ENCODE measurements at regions of chr22 and their contacts with region 1.

Region 1: GRCh38 chr22:24768537-24769374 is 5.8 kb downstream of the PIWIL3 start:
- DNase-seq: peak; percentile 65 to 81 (median 72)
- ATAC-seq: peak; percentile 93 to 100 (median 97)
- H3K4me3 ChIP-seq: no peak overlapping the region
- H3K27ac ChIP-seq: no peak overlapping the region
- H3K4me1 ChIP-seq: no peaks in the 10 kb centered on the region
- H3K27me3 ChIP-seq: no peaks in the 10 kb centered on the region
- CTCF ChIP-seq: peak; percentile 42 to 77 (median 61)

Region 2: DNA sequence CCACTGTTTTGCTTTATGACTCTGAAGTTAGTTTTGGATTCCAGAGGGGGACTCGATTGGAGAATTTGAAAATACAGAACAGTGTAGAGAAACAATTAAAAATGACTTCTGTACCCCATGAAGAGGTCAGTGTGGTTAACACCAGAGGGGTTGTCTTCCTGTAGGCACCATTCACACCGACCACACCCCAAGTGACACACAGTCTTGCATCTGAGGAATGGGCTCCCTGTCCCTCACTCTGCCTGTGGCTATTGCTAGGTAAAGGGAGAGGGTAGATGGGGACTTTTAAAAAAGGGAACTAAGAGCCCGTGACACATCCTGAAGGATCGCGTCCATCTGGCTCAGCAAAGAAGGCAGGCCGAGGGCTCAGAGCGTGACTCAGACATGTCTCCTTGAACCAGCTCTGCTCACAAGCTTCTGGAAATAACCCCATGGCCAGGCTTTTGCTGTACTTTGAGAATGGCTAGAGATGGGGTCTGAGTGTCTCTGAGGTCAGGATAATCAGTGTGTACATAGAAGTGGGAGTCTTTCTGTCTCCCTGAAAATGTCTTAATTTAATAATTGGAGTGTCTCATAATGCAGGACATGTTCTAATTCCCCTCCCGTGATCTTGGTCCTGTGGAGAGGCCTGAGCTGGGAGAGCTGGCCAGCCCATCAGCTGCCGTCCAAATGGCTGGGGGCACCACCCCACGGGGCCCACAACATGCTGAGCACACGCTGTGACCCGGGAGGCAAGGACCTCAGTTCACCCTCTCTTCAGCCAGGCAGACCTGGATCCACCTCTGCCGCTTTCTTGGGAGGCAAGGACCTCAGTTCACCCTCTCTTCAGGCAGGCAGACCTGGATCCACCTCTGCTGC is 76.5 kb after region 1 on chr22:
- intact Hi-C with region 1: loop called in 2 of 3 experiments (anchors 5 kb)
- DNase-seq: no peak
- ATAC-seq: peak in 1 of 4 donors; percentile 7
- H3K4me3 ChIP-seq: no peak overlapping the region
- H3K27ac ChIP-seq: no peak overlapping the region
- H3K4me1 ChIP-seq: peaks cover 0 to 6% (median 0%) of the 10 kb centered on the region in 3 donors
- H3K27me3 ChIP-seq: no peaks in the 10 kb centered on the region
- CTCF ChIP-seq: no peak

Region 3: DNA sequence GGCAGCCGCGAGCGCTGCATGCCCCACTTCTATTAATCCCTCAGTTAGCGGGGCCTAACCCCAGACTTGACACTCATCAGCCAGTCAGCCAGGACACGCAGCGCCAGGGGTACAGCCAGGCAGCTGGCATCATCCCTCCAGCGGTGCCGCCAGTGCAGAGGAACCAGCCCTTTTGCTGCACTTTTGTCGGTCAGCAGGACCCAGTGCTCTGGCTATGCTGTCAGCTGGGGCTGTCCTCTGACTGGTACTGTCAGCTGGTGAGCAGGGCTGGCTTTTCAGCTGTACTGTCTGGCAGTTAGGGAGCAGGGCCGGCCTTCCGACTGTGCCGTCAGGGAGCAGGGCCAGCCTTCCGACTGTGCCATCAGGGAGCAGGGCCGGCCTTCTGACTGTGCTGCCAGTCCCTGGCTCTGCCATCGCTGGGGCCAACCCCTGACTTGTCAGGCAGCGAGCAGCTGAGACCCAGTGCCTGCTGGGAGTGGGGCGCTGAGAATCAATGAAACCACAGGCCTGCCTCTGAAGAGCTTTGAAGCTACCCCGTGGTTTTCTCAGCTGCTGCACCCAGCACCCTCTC is 299.2 kb after region 1 on chr22:
- intact Hi-C with region 1: loop called in 1 of 3 experiments (anchors 10 kb)
- DNase-seq: no peak
- ATAC-seq: peak; percentile 26 to 44 (median 40)
- H3K4me3 ChIP-seq: no peak overlapping the region
- H3K27ac ChIP-seq: no peak overlapping the region
- H3K4me1 ChIP-seq: no peaks in the 10 kb centered on the region
- H3K27me3 ChIP-seq: no peaks in the 10 kb centered on the region
- CTCF ChIP-seq: no peak